Colonic mucosa (tissue), 4 donors: ENCODE measurements at regions of chr11 and their contacts with region 1.

Region 1: GRCh38 chr11:88569342-88569741 is 231.8 kb upstream of the CTSC start:
- DNase-seq: no peak
- H3K4me3 ChIP-seq: no peak overlapping the region
- H3K27ac ChIP-seq: no peak overlapping the region
- H3K4me1 ChIP-seq: no peaks in the 10 kb centered on the region
- H3K27me3 ChIP-seq: no peaks in the 10 kb centered on the region
- CTCF ChIP-seq: no peak

Region 2: DNA sequence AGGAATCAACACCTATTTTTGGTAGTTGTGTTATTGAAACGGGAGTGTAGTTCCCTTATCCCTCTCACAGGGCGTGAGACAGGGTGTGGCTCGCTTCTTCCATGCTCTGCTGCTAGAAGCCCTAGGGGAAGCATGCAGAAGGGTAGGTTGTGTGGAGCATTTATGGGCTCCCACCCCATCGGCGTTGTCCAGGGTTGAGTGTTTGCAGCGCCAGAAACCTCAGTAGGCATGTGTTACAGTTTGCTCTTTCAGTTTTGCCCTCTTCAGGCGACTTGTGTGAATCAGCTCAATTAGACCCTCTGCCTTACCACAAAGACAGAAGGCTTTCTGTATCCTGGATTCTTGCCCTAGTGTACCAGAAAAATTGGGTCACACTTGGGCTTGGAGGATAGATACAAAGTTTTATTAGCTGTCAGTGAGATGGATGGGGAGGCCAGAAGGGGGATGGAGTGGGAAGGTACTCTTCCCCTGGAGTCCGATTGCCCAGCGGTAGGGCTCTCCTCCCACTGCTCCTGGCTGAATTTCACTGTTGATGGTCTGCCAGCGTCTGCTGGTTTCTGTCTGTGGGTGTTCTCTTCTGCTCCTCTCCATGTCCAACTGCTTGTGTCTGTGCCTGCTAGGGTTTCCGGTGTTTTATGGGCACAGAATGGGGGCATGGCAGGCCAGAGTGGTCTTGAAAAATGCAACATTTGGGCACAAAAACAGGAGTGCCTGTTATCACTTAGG is 126.5 kb after region 1 on chr11:
- intact Hi-C with region 1: loop called (anchors 10 kb)
- DNase-seq: no peak
- H3K4me3 ChIP-seq: no peak overlapping the region
- H3K27ac ChIP-seq: no peak overlapping the region
- H3K4me1 ChIP-seq: no peaks in the 10 kb centered on the region
- H3K27me3 ChIP-seq: no peaks in the 10 kb centered on the region
- CTCF ChIP-seq: no peak